ENCODE measurements at regions of chr4 and their contacts with region 1.

Region 1: GRCh38 chr4:163611784-163612445 is 117.4 kb downstream of the TMA16 start:
- DNase-seq: no peak
- H3K4me3 ChIP-seq: peak overlapping the region; percentile 32
- H3K27ac ChIP-seq: no peak overlapping the region
- H3K4me1 ChIP-seq: peaks cover 64% of the 10 kb centered on the region
- CTCF ChIP-seq: no peak

Region 2: DNA sequence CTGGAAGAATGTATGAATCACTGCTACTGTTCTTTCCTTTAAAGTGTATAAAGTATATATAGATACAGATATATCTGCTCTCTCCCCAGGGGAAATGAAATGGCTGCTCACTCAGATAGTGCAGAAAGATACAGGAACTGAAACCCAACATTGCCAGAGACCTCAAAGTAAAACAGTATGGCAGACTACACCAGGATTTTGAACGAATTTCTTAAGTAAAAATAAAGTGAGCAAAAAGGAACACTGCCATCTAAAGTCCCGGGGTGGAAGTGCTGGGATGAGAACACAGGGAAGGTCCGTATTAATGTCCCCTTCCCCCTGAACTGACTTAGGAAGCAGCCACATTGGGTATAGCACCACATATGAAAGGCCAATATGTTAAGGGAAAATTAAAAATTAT is 24.0 kb before region 1 on chr4:
- CTCF ChIA-PET with region 1: interaction called, 3 read pairs
- POLR2A ChIA-PET with region 1: interaction called, 27 read pairs
- intact Hi-C with region 1: loop called (anchors 2 kb)
- DNase-seq: peak; percentile 87
- H3K4me3 ChIP-seq: peak overlapping the region; percentile 17
- H3K27ac ChIP-seq: peak overlapping the region; percentile 64
- H3K4me1 ChIP-seq: peaks cover 58% of the 10 kb centered on the region
- CTCF ChIP-seq: peak; percentile 92

Region 3: GRCh38 chr4:163598028-163598427 is 13.9 kb before region 1 on chr4:
- CTCF ChIA-PET with region 1: no interaction called
- POLR2A ChIA-PET with region 1: interaction called, 65 read pairs
- intact Hi-C with region 1: loop called (anchors 1 kb)
- DNase-seq: peak; percentile 26
- H3K4me3 ChIP-seq: no peak overlapping the region
- H3K27ac ChIP-seq: peak overlapping the region; percentile 61
- H3K4me1 ChIP-seq: peaks cover 63% of the 10 kb centered on the region
- CTCF ChIP-seq: no peak

Region 4: DNA sequence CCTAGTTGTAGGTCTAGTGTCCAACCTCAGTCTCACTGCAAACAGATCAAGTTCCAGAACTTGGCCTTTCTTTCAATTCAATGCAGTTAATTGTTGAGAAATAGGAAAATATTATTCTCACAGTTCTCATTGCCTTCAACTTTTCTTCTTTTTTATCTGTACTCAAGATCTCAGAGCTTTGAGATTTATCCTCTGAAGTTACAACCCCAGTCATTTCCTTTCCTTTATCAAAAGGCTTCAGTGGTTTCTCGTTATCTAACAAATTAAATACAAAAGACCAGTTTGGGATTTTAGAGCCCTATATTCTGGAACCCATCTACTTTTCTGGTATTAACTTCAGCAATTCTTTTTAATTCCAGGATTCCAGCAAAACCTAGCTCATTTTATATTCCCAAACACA is 12.8 kb after region 1 on chr4:
- CTCF ChIA-PET with region 1: no interaction called
- POLR2A ChIA-PET with region 1: interaction called, 10 read pairs
- intact Hi-C with region 1: no loop called
- DNase-seq: no peak
- H3K4me3 ChIP-seq: no peak overlapping the region
- H3K27ac ChIP-seq: no peak overlapping the region
- H3K4me1 ChIP-seq: no peaks in the 10 kb centered on the region
- CTCF ChIP-seq: no peak

Measured in OCI-LY7 (cell line).